Transverse colon (tissue), 4 donors: ENCODE measurements at regions of chr3 and their contacts with region 1.

Region 1: GRCh38 chr3:97935842-97936241 is 36.4 kb downstream of the RIOX2 start:
- DNase-seq: no peak
- H3K4me3 ChIP-seq: no peak overlapping the region
- H3K27ac ChIP-seq: no peak overlapping the region
- H3K4me1 ChIP-seq: no peaks in the 10 kb centered on the region
- H3K27me3 ChIP-seq: no peaks in the 10 kb centered on the region
- CTCF ChIP-seq: no peak
- EP300 ChIP-seq: no peak
- POLR2A ChIP-seq: no peak

Region 2: GRCh38 chr3:97264180-97264579 is 671.7 kb before region 1 on chr3:
- in situ Hi-C with region 1: no loop called
- intact Hi-C with region 1: no loop called
- DNase-seq: no peak
- H3K4me3 ChIP-seq: no peak overlapping the region
- H3K27ac ChIP-seq: no peak overlapping the region
- H3K4me1 ChIP-seq: no peaks in the 10 kb centered on the region
- H3K27me3 ChIP-seq: no peaks in the 10 kb centered on the region
- CTCF ChIP-seq: no peak
- EP300 ChIP-seq: no peak
- POLR2A ChIP-seq: no peak

Region 3: DNA sequence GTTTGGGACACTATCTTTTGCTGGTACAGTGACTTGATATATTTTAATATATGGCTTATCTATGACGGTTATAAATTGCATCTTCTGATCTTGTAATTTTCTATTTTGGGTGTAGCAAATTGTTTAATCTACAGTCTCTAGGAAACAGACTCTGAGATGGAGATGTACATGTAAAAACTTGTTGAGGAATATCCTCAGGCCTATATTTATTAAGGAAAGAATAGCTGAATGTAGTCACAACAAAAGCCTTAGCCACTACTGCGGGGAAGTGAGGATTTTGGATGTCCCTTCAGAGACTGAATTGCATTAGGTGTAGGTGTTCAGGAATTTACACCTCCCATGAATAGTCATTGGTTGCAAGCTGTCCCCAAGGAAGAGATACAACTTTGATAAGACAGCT is 440.8 kb after region 1 on chr3:
- in situ Hi-C with region 1: no loop called
- intact Hi-C with region 1: loop called (anchors 5 kb)
- DNase-seq: no peak
- H3K4me3 ChIP-seq: no peak overlapping the region
- H3K27ac ChIP-seq: no peak overlapping the region
- H3K4me1 ChIP-seq: no peaks in the 10 kb centered on the region
- H3K27me3 ChIP-seq: no peaks in the 10 kb centered on the region
- CTCF ChIP-seq: no peak
- EP300 ChIP-seq: no peak
- POLR2A ChIP-seq: no peak